Posterior cingulate gyrus (tissue), 11 donors: ENCODE measurements at regions of chr7 and their contacts with region 1.

Region 1: GRCh38 chr7:106461993-106462859 is 177.4 kb upstream of the NAMPT start:
- DNase-seq: no peak

Region 2: GRCh38 chr7:106176414-106177299 is 285.6 kb before region 1 on chr7:
- intact Hi-C with region 1: loop called (anchors 1 kb)
- DNase-seq: peak; percentile 70 to 97 (median 86)

Region 3: DNA sequence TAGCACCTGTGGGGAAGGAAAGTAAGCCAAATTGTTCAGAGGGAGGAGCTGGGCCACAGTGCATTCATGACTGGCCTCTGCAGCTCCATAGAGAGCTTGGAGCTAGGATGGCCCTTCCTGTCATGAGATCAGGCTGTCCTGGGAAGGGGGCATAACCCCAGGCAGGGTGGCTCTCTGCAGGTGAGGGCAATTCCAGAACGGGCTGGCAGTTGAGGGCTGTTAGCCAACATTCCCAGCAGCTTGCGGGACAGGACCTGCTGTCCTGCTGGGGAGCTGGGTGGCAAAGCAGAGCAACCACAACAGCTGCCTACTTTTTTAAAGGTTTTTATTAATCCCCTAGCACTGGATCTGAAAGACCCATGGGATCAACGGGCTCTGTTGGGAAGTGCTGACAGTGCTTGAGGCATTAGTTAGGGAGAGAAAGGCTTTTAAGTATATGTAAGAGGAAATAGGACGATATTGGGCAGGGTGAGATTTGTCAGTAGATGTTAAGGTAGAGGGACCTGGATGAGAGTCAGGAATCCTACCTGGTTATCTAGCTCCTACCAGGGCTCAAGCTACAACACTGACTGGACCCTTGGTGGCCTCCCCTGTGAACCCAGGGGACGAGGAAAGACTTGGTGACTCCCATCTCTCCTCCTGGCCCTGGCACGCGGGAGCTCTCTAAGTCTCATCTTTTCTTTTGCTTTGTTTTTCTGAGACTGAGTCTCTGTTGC is 255.2 kb before region 1 on chr7:
- intact Hi-C with region 1: no loop called
- DNase-seq: no peak

Region 4: GRCh38 chr7:106504645-106505044 is 42.4 kb after region 1 on chr7:
- intact Hi-C with region 1: no loop called
- DNase-seq: no peak